ENCODE measurements at regions of chr9 and their contacts with region 1.

Region 1: DNA sequence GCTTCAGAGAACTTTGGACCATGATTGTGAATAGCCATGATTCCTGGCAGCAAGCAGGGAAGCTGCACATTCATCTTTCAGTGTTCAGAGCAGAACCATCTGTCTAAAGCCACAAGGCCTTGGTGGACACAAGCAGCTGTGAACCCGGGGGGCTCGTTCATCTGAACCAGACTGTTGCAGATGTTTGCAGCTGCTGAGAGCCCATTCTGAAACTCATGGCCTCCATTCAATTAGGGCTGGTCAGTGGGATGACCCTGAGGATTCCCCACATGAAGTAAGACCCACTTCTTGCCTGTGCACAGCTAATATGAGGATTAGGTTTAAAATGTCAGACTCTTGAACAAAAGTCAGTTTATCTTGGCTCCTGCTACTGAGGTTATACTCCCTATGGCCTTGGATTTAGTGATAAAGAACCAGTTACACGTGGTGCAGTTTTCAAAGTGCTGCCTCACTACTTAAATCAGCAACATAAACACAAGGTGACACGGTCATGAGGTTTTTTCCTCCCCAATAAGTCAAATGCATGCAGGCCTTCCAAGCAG is 109.8 kb upstream of the IFNK start:
- DNase-seq: peak; percentile 53
- ATAC-seq: peak; percentile 78

Region 2: GRCh38 chr9:27353474-27354229 is 60.6 kb before region 1 on chr9:
- intact Hi-C with region 1: loop called (anchors 10 kb)
- DNase-seq: no peak
- ATAC-seq: no peak